Transverse colon (tissue), 4 donors: ENCODE measurements at regions of chr14 and their contacts with region 1.

Region 1: DNA sequence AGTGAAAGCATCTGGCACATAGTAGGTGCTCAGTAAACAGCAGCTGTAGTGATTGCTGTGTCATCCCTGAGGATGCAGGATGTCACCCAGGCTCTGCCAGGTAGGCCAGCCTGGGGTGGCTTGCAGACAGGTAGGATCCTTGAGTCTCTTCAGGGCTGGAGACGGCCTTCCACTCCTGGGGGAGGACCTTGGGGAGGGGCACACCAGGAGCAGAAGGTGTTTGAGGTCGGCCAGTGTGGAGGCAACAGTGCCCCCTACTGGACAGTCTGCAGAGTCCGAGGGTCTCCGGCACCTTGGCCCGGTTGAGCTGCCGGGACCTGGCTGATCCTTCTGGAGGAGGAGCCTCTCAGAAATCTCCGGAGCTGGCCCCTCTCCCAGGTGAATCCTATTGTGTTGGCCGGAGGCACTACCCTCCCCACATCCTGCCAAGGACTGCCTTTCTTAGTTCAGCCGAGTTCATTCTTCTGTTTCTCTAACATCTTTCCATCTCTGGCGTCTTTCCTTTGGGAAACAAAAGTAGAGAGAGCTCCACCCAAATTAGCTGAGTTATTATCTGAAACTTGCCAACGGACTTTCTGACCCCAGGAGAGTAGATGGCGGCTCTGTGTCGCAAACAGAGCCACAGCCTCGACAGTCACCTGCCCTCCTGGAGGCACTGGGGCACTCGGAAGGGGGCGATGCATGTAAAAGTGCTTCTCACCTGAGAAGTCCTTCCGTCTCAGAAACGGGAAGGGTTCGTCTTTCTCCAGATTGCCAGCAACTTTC is 41.8 kb upstream of the CLMN start:
- DNase-seq: peak; percentile 75
- H3K4me3 ChIP-seq: no peak overlapping the region
- H3K27ac ChIP-seq: no peak overlapping the region
- H3K4me1 ChIP-seq: no peaks in the 10 kb centered on the region
- H3K27me3 ChIP-seq: no peaks in the 10 kb centered on the region
- CTCF ChIP-seq: peak; percentile 67 to 78 (median 67)
- EP300 ChIP-seq: no peak
- POLR2A ChIP-seq: no peak

Region 2: DNA sequence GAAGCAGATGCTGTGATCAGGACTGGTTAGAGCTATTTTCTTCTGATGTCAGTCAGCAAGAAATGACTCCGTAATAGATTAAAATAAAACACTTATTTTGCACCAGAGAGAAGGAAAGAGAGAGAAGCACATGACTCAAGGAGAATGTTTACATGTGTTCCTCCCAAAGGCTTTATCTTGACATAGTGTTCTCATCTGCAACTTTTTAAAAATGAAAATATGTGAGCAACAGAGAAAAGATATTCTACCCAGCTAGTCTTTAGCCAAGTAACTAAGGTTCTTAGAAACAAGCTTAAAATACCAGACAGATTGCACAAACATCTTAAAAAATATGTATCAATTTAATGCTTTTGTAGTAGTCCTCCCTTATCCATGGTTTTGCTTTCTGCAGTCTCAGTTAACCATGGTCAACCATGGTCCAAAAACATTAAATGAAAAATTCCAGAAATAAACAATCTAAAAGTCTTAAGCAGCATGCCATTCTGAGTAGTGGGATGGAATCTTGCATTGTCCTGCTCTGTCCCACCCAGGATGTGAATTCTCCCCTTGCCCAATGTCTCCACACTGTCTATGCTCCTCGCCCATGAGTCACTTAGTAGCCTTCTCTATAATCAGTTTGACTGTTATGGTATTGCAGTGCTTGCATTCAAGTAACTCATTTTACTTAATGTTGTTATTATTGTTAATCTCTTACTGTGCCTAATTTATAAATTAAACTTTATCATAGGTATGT is 1078.4 kb before region 1 on chr14:
- in situ Hi-C with region 1: no loop called
- intact Hi-C with region 1: loop called (anchors 10 kb)
- DNase-seq: no peak
- H3K4me3 ChIP-seq: no peak overlapping the region
- H3K27ac ChIP-seq: no peak overlapping the region
- H3K4me1 ChIP-seq: no peaks in the 10 kb centered on the region
- H3K27me3 ChIP-seq: no peaks in the 10 kb centered on the region
- CTCF ChIP-seq: no peak
- EP300 ChIP-seq: no peak
- POLR2A ChIP-seq: no peak

Region 3: DNA sequence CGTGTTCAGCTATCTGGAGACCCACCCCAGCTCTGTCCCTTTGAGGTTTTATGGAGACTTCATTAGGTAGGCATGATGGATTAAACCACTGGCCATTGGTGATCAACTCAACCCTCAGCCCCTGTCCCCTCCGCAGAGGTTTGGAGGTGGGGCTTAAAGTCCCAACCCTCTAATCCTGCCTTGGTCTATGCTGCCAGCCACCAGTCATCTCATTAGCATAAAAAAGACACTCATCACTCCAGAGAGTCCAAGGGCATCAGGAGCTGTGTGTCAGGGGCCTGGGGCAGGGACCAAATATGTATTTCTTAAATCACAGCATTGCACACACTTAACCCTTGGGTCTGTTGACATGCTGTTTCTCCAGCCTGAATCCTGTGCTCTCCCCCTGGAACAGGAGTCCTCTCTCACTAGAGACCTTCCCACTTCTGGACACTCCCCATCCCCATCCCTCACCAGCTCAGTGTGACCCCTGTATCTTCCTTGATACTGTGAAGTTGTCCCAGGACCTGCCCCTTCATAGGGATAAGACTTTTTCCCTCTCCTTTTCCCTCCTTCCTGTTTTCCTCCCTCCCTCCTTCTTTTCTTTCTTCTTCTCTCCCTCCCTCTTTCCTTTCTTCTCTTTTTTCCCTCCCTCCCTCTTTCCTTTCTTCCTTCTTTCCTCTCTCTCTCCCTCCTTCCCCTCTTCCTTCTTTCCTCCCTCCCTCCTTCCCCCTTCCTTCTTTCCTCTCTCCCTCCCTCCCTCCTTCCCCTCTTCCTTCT is 12.9 kb after region 1 on chr14:
- in situ Hi-C with region 1: no loop called
- intact Hi-C with region 1: no loop called
- DNase-seq: no peak
- H3K4me3 ChIP-seq: no peak overlapping the region
- H3K27ac ChIP-seq: no peak overlapping the region
- H3K4me1 ChIP-seq: no peaks in the 10 kb centered on the region
- H3K27me3 ChIP-seq: no peaks in the 10 kb centered on the region
- CTCF ChIP-seq: no peak
- EP300 ChIP-seq: no peak
- POLR2A ChIP-seq: no peak

Region 4: GRCh38 chr14:96538097-96538989 is 1176.8 kb after region 1 on chr14:
- in situ Hi-C with region 1: no loop called
- intact Hi-C with region 1: loop called (anchors 10 kb)
- DNase-seq: no peak
- H3K4me3 ChIP-seq: no peak overlapping the region
- H3K27ac ChIP-seq: no peak overlapping the region
- H3K4me1 ChIP-seq: peaks cover 0 to 12% (median 3%) of the 10 kb centered on the region in 4 donors
- H3K27me3 ChIP-seq: no peaks in the 10 kb centered on the region
- CTCF ChIP-seq: no peak
- EP300 ChIP-seq: no peak
- POLR2A ChIP-seq: no peak